CD8-positive, alpha-beta T cell (primary cell): ENCODE measurements at regions of chr1 and their contacts with region 1.

Region 1: DNA sequence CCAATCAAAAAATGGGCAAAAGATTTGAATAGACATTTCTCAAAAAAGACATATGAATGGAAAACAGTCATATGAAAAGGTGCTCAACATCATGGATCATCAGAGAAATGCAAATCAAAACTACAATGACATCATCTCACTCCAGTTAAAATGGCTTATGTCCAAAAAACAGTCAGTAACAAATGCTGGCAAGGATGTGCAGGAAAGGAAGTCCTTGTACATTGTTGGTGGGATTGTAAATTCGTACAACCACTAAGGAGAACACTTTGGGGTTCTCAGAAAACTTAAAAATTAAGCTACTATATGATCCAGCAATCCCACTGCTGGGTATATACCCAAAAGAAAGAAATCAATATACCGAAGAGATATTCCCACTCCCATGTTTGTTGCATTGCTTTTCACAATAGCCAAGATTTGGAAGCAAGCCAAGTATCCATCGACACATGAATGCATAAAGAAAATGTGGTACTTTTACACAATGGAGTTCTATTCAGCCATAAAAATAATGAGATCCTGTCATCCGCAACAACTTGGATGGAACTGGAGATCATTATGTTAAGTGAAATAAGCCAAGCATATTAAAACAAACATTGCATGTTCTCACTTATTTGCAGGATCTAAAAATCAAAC is 17.9 kb downstream of the GBP5 start:
- DNase-seq: no peak
- ATAC-seq: no peak
- H3K4me3 ChIP-seq: no peak overlapping the region
- H3K4me3 Mint-ChIP-seq: no peak overlapping the region
- H3K27ac ChIP-seq: no peak overlapping the region
- H3K27ac Mint-ChIP-seq: peak overlapping the region; percentile 10
- H3K4me1 ChIP-seq: peaks cover 23% of the 10 kb centered on the region
- H3K4me1 Mint-ChIP-seq: peaks cover 52% of the 10 kb centered on the region
- H3K27me3 ChIP-seq: no peaks in the 10 kb centered on the region
- H3K27me3 Mint-ChIP-seq: no peaks in the 10 kb centered on the region
- CTCF ChIP-seq: no peak

Region 2: GRCh38 chr1:89211035-89211634 is 43.6 kb before region 1 on chr1:
- CTCF ChIA-PET with region 1: no interaction called
- POLR2A ChIA-PET with region 1: no interaction called
- intact Hi-C with region 1: loop called in 1 of 2 experiments (anchors 5 kb)
- DNase-seq: no peak
- ATAC-seq: no peak
- H3K4me3 ChIP-seq: no peak overlapping the region
- H3K4me3 Mint-ChIP-seq: no peak overlapping the region
- H3K27ac ChIP-seq: no peak overlapping the region
- H3K27ac Mint-ChIP-seq: no peak overlapping the region
- H3K4me1 ChIP-seq: no peaks in the 10 kb centered on the region
- H3K4me1 Mint-ChIP-seq: peaks cover 4% of the 10 kb centered on the region
- H3K27me3 ChIP-seq: no peaks in the 10 kb centered on the region
- H3K27me3 Mint-ChIP-seq: no peaks in the 10 kb centered on the region
- CTCF ChIP-seq: no peak

Region 3: GRCh38 chr1:89310505-89310904 is 55.7 kb after region 1 on chr1:
- CTCF ChIA-PET with region 1: no interaction called
- POLR2A ChIA-PET with region 1: interaction called, 5 read pairs
- intact Hi-C with region 1: loop called in 1 of 2 experiments (anchors 2 kb)
- DNase-seq: peak in 2 of 9 experiments; percentile 27 to 57
- ATAC-seq: peak; percentile 54
- H3K4me3 ChIP-seq: no peak overlapping the region
- H3K4me3 Mint-ChIP-seq: peak overlapping the region; percentile 47
- H3K27ac ChIP-seq: peak overlapping the region; percentile 22 to 64
- H3K27ac Mint-ChIP-seq: peak overlapping the region; percentile 90
- H3K4me1 ChIP-seq: peaks cover 39% of the 10 kb centered on the region
- H3K4me1 Mint-ChIP-seq: peaks cover 54% of the 10 kb centered on the region
- H3K27me3 ChIP-seq: no peaks in the 10 kb centered on the region
- H3K27me3 Mint-ChIP-seq: no peaks in the 10 kb centered on the region
- CTCF ChIP-seq: no peak

Region 4: GRCh38 chr1:89407360-89407759 is 152.6 kb after region 1 on chr1:
- CTCF ChIA-PET with region 1: no interaction called
- POLR2A ChIA-PET with region 1: no interaction called
- intact Hi-C with region 1: no loop called
- DNase-seq: peak in 2 of 9 experiments; percentile 7 to 22
- ATAC-seq: no peak
- H3K4me3 ChIP-seq: peak overlapping the region; percentile 24 to 38
- H3K4me3 Mint-ChIP-seq: peak overlapping the region; percentile 85
- H3K27ac ChIP-seq: no peak overlapping the region
- H3K27ac Mint-ChIP-seq: peak overlapping the region; percentile 63
- H3K4me1 ChIP-seq: peaks cover 15% of the 10 kb centered on the region
- H3K4me1 Mint-ChIP-seq: peaks cover 27% of the 10 kb centered on the region
- H3K27me3 ChIP-seq: no peaks in the 10 kb centered on the region
- H3K27me3 Mint-ChIP-seq: no peaks in the 10 kb centered on the region
- CTCF ChIP-seq: no peak

Region 5: GRCh38 chr1:89433421-89433820 is 178.6 kb after region 1 on chr1:
- CTCF ChIA-PET with region 1: no interaction called
- POLR2A ChIA-PET with region 1: no interaction called
- intact Hi-C with region 1: no loop called
- DNase-seq: no peak
- ATAC-seq: no peak
- H3K4me3 ChIP-seq: no peak overlapping the region
- H3K4me3 Mint-ChIP-seq: no peak overlapping the region
- H3K27ac ChIP-seq: no peak overlapping the region
- H3K27ac Mint-ChIP-seq: no peak overlapping the region
- H3K4me1 ChIP-seq: no peaks in the 10 kb centered on the region
- H3K4me1 Mint-ChIP-seq: no peaks in the 10 kb centered on the region
- H3K27me3 ChIP-seq: no peaks in the 10 kb centered on the region
- H3K27me3 Mint-ChIP-seq: no peaks in the 10 kb centered on the region
- CTCF ChIP-seq: no peak

Region 6: GRCh38 chr1:90143522-90144050 is 888.8 kb after region 1 on chr1:
- CTCF ChIA-PET with region 1: no interaction called
- POLR2A ChIA-PET with region 1: no interaction called
- intact Hi-C with region 1: no loop called
- DNase-seq: no peak
- ATAC-seq: no peak
- H3K4me3 ChIP-seq: no peak overlapping the region
- H3K4me3 Mint-ChIP-seq: no peak overlapping the region
- H3K27ac ChIP-seq: no peak overlapping the region
- H3K27ac Mint-ChIP-seq: no peak overlapping the region
- H3K4me1 ChIP-seq: no peaks in the 10 kb centered on the region
- H3K4me1 Mint-ChIP-seq: no peaks in the 10 kb centered on the region
- H3K27me3 ChIP-seq: no peaks in the 10 kb centered on the region
- H3K27me3 Mint-ChIP-seq: peaks cover 5% of the 10 kb centered on the region
- CTCF ChIP-seq: no peak